ENCODE measurements at regions of chr16 and their contacts with region 1.

Region 1: GRCh38 chr16:56600398-56600999 is 7.9 kb upstream of the MT2A start:
- DNase-seq: peak; percentile 59
- ATAC-seq: peak; percentile 72
- H3K4me3 ChIP-seq: no peak overlapping the region
- H3K27ac ChIP-seq: no peak overlapping the region
- H3K4me1 ChIP-seq: peaks cover 19% of the 10 kb centered on the region
- H3K27me3 ChIP-seq: peaks cover 0 to 7% of the 10 kb centered on the region in 2 experiments; a peak in 2 of 5 replicates
- CTCF ChIP-seq: peak; percentile 85
- EP300 ChIP-seq: no peak
- POLR2A ChIP-seq: no peak
- RAD21 ChIP-seq: peak; percentile 43; the same call in 1 of the 2 replicates

Region 2: GRCh38 chr16:56513972-56514371 is 86.5 kb before region 1 on chr16:
- CTCF ChIA-PET with region 1: interaction called, 20 read pairs
- POLR2A ChIA-PET with region 1: no interaction called
- in situ Hi-C with region 1: no loop called
- intact Hi-C with region 1: loop called (anchors 1 kb)
- DNase-seq: peak; percentile 80
- ATAC-seq: peak; percentile 93
- H3K4me3 ChIP-seq: no peak overlapping the region
- H3K27ac ChIP-seq: no peak overlapping the region
- H3K4me1 ChIP-seq: peaks cover 19% of the 10 kb centered on the region
- H3K27me3 ChIP-seq: no peaks in the 10 kb centered on the region
- CTCF ChIP-seq: peak; percentile 77
- EP300 ChIP-seq: no peak
- POLR2A ChIP-seq: no peak
- RAD21 ChIP-seq: peak; percentile 84

Region 3: DNA sequence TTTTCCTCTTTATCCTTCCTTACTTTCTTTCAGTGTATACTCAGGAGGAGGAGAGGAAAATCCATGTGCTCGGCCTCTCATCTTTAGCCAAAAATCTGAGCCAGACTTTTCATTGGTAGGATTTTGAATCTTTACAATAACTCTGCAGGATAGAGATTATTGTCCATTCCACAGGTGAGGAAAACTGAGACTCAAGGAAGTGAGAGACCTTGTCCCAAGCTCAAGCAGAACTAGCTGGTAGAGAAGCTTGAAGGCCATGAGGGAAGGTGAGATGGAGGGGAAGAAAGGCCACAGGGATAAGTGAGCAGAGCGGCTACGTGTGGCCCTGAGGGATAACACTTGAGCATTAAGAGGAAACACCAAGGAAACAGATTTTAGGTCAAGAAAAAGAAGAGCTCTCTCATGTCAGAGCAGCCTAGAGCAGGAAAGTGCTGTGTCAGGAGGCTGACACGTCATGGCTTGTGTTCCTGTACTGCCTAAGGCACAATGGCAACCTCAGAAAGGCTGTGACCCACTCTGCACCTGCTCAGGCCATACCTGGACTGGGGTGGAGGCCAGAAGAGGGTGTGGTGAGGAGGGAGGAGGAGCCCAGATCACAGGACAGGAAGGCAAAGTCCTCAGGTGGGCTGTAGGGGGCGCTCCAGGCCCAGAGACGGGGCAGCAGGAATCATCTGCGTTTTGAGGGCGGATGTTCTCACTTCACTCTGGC is 23.8 kb before region 1 on chr16:
- CTCF ChIA-PET with region 1: interaction called, 20 read pairs
- POLR2A ChIA-PET with region 1: no interaction called
- in situ Hi-C with region 1: no loop called
- intact Hi-C with region 1: loop called (anchors 1 kb)
- DNase-seq: peak; percentile 69
- ATAC-seq: peak; percentile 100
- H3K4me3 ChIP-seq: no peak overlapping the region
- H3K27ac ChIP-seq: no peak overlapping the region
- H3K4me1 ChIP-seq: no peaks in the 10 kb centered on the region
- H3K27me3 ChIP-seq: peaks cover 0 to 3% of the 10 kb centered on the region in 2 experiments; a peak in 2 of 5 replicates
- CTCF ChIP-seq: peak; percentile 99
- EP300 ChIP-seq: no peak
- POLR2A ChIP-seq: no peak
- RAD21 ChIP-seq: peak; percentile 93

Region 4: DNA sequence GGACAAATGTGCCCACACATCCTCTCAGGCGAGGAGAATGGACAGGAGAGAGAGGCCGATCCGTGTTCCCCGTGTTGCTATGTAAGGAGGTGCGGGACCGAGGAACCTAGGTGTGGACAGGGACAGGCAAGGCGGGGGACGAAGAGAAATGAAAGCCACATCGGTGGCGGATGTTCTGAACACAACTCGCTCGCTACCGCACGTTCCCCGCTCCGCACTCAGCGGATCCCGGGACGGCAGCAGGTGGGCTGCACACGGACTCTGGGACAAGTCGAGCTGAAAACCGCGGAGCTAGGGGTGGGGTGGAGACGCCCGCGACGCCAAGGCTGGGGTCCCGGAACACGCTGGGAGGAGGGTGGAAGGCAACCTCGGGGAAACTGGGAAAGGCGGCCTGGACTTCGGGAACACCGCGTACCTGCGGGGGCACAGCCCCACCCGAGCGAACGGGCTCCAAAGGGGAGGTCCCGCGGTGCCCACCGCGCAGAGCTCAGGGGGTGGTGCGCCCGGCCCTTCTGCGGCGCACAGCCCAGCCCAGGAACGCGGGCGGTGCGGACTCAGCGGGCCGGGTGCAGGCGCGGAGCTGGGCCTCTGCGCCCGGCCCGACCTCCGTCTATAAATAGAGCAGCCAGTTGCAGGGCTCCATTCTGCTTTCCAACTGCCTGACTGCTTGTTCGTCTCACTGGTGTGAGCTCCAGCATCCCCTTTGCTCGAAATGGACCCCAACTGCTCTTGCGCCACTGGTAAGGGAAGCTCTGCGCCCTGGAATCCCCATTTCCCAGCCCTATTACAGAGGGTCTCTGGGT is 24.8 kb after region 1 on chr16 and contains the start of gene MT1E:
- CTCF ChIA-PET with region 1: no interaction called
- POLR2A ChIA-PET with region 1: interaction called, 39 read pairs
- in situ Hi-C with region 1: no loop called
- intact Hi-C with region 1: no loop called
- DNase-seq: peak; percentile 63
- ATAC-seq: peak; percentile 92
- H3K4me3 ChIP-seq: peak within 1 kb of the TSS; percentile 63 to 88 (median 72)
- H3K27ac ChIP-seq: no peak within 1 kb of the TSS
- H3K4me1 ChIP-seq: peaks cover 60% of the 10 kb centered on the region
- H3K27me3 ChIP-seq: peaks cover 0 to 34% of the 10 kb centered on the region in 2 experiments; a peak in 3 of 5 replicates
- CTCF ChIP-seq: no peak
- EP300 ChIP-seq: no peak
- POLR2A ChIP-seq: peak; percentile 94 to 99
- RAD21 ChIP-seq: peak; percentile 52; the same call in 1 of the 2 replicates
- total RNA-seq, gene MT1E: 1,072 and 1,398 TPM in 2 replicates